B cell (primary cell): ENCODE measurements at regions of chr13 and their contacts with region 1.

Region 1: GRCh38 chr13:98445340-98446233 is 131.3 kb downstream of the STK24 start:
- DNase-seq: peak; percentile 83
- ATAC-seq: peak; percentile 98
- H3K4me3 ChIP-seq: peak overlapping the region in 2 of 5 experiments; percentile 19 to 30
- H3K4me3 Mint-ChIP-seq: peak overlapping the region; percentile 58
- H3K27ac ChIP-seq: peak overlapping the region; percentile 52 to 69
- H3K27ac Mint-ChIP-seq: peak overlapping the region; percentile 81
- H3K4me1 ChIP-seq: peaks cover 9 to 12% of the 10 kb centered on the region in 2 donors
- H3K4me1 Mint-ChIP-seq: peaks cover 11% of the 10 kb centered on the region
- H3K27me3 ChIP-seq: no peaks in the 10 kb centered on the region
- H3K27me3 Mint-ChIP-seq: no peaks in the 10 kb centered on the region
- CTCF ChIP-seq: peak; percentile 99

Region 2: GRCh38 chr13:96444676-96445075 is 2000.9 kb before region 1 on chr13:
- CTCF ChIA-PET with region 1: no interaction called
- POLR2A ChIA-PET with region 1: no interaction called
- intact Hi-C with region 1: no loop called
- DNase-seq: no peak
- ATAC-seq: no peak
- H3K4me3 ChIP-seq: no peak overlapping the region
- H3K4me3 Mint-ChIP-seq: no peak overlapping the region
- H3K27ac ChIP-seq: no peak overlapping the region
- H3K27ac Mint-ChIP-seq: no peak overlapping the region
- H3K4me1 ChIP-seq: no peaks in the 10 kb centered on the region
- H3K4me1 Mint-ChIP-seq: no peaks in the 10 kb centered on the region
- H3K27me3 ChIP-seq: no peaks in the 10 kb centered on the region
- H3K27me3 Mint-ChIP-seq: no peaks in the 10 kb centered on the region
- CTCF ChIP-seq: no peak

Region 3: DNA sequence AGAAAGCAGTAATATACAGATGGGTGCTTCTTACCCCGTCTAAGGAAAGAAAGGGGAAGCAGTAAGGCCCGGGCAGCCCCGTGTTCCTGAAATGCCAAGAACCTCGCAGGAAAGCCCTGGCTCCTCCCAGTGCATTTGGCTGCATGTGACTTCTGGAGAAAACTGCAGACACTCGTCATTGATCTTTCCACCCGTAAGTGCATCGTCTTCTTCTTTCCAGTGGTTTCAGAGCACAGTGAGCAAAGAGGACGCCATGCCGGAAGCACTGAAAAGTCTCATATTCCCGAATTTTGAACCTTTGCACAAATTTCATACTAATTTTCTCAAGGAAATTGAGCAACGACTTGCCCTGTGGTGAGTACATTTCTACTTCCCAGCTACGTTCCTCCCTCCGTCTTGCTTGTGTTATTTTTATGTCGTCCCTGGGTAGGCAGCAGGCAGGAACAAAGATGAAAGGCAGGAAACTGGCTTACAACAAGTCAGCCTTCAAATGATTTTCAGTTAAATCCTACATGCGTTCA is 33.8 kb before region 1 on chr13:
- CTCF ChIA-PET with region 1: no interaction called
- POLR2A ChIA-PET with region 1: no interaction called
- intact Hi-C with region 1: no loop called
- DNase-seq: no peak
- ATAC-seq: no peak
- H3K4me3 ChIP-seq: peak overlapping the region in 1 of 5 experiments; percentile 11
- H3K4me3 Mint-ChIP-seq: peak overlapping the region; percentile 11
- H3K27ac ChIP-seq: no peak overlapping the region
- H3K27ac Mint-ChIP-seq: no peak overlapping the region
- H3K4me1 ChIP-seq: peaks cover 5 to 7% of the 10 kb centered on the region in 2 donors
- H3K4me1 Mint-ChIP-seq: peaks cover 7% of the 10 kb centered on the region
- H3K27me3 ChIP-seq: peaks cover 0 to 18% (median 7%) of the 10 kb centered on the region in 4 experiments
- H3K27me3 Mint-ChIP-seq: peaks cover 49% of the 10 kb centered on the region
- CTCF ChIP-seq: no peak

Region 4: DNA sequence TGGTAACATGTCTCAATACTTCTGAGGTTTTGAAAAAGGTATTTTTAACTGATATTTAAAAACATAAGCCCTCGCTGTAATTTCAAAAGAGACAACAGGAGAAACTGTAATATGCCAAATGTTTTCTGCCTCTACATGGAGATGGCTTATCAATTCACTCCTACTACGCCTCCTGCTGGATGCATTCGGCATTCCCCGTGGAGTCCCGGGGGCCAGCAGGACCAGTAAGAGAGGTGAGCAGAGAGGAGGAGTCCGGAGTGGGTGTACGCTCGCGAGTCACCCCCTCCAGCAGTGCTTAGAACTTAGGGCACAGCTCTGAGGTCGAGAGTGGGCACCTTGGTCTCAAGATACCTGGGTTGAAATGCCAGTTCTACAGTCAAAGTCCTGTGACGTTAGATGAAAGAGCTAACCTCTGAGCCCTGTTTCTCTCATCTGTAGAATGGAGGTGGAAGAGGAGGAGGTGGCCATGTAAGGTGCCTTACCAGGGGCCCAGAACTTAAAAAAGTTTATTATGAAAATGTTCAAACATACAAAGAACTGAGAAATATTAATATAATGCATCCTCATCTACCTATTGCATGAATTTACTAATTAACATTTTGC is 21.1 kb after region 1 on chr13:
- CTCF ChIA-PET with region 1: interaction called, 18 read pairs
- POLR2A ChIA-PET with region 1: no interaction called
- intact Hi-C with region 1: no loop called
- DNase-seq: peak; percentile 39
- ATAC-seq: no peak
- H3K4me3 ChIP-seq: no peak overlapping the region
- H3K4me3 Mint-ChIP-seq: no peak overlapping the region
- H3K27ac ChIP-seq: no peak overlapping the region
- H3K27ac Mint-ChIP-seq: no peak overlapping the region
- H3K4me1 ChIP-seq: no peaks in the 10 kb centered on the region
- H3K4me1 Mint-ChIP-seq: no peaks in the 10 kb centered on the region
- H3K27me3 ChIP-seq: no peaks in the 10 kb centered on the region
- H3K27me3 Mint-ChIP-seq: no peaks in the 10 kb centered on the region
- CTCF ChIP-seq: peak; percentile 61

Region 5: DNA sequence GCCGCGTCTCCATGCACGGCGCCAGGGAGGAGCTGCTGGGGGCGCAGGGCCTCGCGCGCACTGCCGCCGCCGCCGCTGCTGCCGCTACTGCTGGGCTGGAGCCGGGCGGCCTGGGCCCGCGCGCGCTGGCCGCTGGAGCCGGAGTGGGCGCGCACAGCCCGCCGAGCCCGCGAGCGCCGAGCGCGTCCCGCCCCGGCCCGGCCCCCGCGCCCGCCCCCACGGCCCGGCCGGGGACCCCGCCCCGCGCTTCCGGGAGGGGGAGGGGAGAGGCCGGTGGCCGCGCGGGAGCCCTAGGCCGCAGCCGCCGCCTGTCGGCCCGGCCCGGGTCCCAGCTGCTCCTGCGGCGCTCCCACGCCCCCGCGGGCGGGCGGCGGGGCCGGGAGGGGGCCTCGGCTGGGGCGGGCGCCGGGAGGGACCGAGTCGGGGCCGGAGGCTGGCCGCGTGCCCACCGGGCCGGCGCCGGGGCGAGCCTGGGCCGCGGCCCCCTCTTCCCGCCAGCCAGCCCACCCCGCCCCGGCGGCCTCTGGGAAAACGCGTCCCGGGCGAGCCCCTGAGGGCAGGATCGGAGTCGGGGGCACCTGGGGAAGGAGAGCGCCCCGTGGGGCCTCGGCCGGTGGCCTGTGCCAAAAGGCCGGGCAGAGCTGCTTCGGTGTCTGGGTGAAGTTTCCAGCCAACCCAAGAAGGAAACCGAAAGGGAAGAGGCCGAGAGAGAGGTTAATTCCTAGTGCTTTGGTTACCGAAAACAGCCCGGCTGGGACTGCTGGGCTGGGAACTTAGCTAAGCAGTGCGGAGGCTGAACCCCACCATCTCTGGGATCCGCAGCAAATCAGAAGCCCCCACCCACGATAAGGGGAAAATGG is 131.6 kb after region 1 on chr13 and contains the start of gene STK24:
- CTCF ChIA-PET with region 1: interaction called, 8 read pairs
- POLR2A ChIA-PET with region 1: no interaction called
- intact Hi-C with region 1: loop called (anchors 10 kb)
- DNase-seq: peak; percentile 80
- ATAC-seq: peak; percentile 83
- H3K4me3 ChIP-seq: peak within 1 kb of the TSS; percentile 51 to 88 (median 72)
- H3K4me3 Mint-ChIP-seq: peak within 1 kb of the TSS; percentile 95
- H3K27ac ChIP-seq: peak within 1 kb of the TSS; percentile 67 to 87
- H3K27ac Mint-ChIP-seq: peak within 1 kb of the TSS; percentile 95
- H3K4me1 ChIP-seq: peaks cover 38 to 39% of the 10 kb centered on the region in 2 donors
- H3K4me1 Mint-ChIP-seq: peaks cover 37% of the 10 kb centered on the region
- H3K27me3 ChIP-seq: no peaks in the 10 kb centered on the region
- H3K27me3 Mint-ChIP-seq: no peaks in the 10 kb centered on the region
- CTCF ChIP-seq: no peak
- total RNA-seq, gene STK24: 117 and 120 TPM in 2 replicates

Region 6: GRCh38 chr13:98664039-98664438 is 218.5 kb after region 1 on chr13:
- CTCF ChIA-PET with region 1: interaction called, 18 read pairs
- POLR2A ChIA-PET with region 1: no interaction called
- intact Hi-C with region 1: no loop called
- DNase-seq: no peak
- ATAC-seq: no peak
- H3K4me3 ChIP-seq: no peak overlapping the region
- H3K4me3 Mint-ChIP-seq: no peak overlapping the region
- H3K27ac ChIP-seq: no peak overlapping the region
- H3K27ac Mint-ChIP-seq: no peak overlapping the region
- H3K4me1 ChIP-seq: no peaks in the 10 kb centered on the region
- H3K4me1 Mint-ChIP-seq: no peaks in the 10 kb centered on the region
- H3K27me3 ChIP-seq: peaks cover 0 to 3% (median 1%) of the 10 kb centered on the region in 4 experiments
- H3K27me3 Mint-ChIP-seq: peaks cover 19% of the 10 kb centered on the region
- CTCF ChIP-seq: no peak

Region 7: GRCh38 chr13:98842864-98843481 is 397.4 kb after region 1 on chr13:
- CTCF ChIA-PET with region 1: interaction called, 3 read pairs
- POLR2A ChIA-PET with region 1: no interaction called
- intact Hi-C with region 1: loop called (anchors 2 kb)
- DNase-seq: peak; percentile 68
- ATAC-seq: peak; percentile 79
- H3K4me3 ChIP-seq: no peak overlapping the region
- H3K4me3 Mint-ChIP-seq: no peak overlapping the region
- H3K27ac ChIP-seq: no peak overlapping the region
- H3K27ac Mint-ChIP-seq: no peak overlapping the region
- H3K4me1 ChIP-seq: no peaks in the 10 kb centered on the region
- H3K4me1 Mint-ChIP-seq: peaks cover 2% of the 10 kb centered on the region
- H3K27me3 ChIP-seq: no peaks in the 10 kb centered on the region
- H3K27me3 Mint-ChIP-seq: no peaks in the 10 kb centered on the region
- CTCF ChIP-seq: peak; percentile 86